AG04450 (cell line): ENCODE measurements at regions of chr4 and their contacts with region 1.

Region 1: GRCh38 chr4:7067452-7068278 is at the start of gene GRPEL1:
- DNase-seq: peak; percentile 97
- H3K4me3 ChIP-seq: peak within 1 kb of the TSS; percentile 87
- H3K27ac ChIP-seq: peak within 1 kb of the TSS; percentile 73
- H3K27me3 ChIP-seq: peaks cover 12% of the 10 kb centered on the region
- CTCF ChIP-seq: no peak
- polyA plus RNA-seq, gene GRPEL1: 34.5 and 39.4 TPM in 2 replicates

Region 2: DNA sequence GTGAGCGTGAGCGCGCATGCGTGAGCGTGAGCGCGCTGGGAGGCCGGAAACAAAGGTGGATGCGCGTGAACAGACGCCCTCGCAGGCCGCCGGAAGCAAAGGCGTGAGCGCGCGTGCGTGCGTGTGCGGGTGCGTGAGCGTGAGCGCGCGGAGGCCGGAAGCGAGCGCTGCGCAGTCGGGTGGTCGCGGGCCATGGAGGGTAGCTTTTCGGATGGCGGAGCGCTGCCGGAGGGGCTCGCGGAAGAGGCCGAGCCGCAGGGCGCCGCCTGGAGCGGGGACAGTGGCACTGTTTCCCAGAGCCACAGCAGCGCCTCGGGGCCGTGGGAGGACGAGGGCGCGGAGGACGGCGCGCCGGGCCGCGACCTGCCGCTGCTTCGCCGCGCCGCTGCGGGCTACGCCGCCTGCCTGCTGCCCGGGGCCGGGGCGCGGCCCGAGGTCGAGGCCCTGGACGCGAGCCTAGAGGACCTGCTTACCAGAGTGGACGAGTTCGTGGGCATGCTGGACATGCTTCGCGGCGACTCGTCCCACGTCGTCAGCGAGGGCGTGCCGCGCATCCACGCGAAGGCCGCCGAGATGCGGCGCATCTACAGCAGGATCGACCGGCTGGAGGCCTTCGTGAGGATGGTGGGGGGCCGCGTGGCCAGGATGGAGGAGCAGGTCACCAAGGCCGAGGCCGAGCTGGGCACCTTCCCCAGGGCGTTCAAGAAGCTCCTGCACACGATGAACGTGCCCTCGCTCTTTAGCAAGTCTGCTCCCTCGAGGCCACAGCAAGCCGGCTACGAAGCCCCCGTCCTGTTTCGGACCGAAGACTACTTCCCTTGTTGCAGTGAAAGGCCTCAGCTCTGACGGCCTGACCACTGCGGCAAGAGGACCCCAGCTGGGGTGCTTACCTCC is 351.4 kb before region 1 on chr4 and contains the start of gene BLOC1S4:
- CTCF ChIA-PET with region 1: interaction called, 23 read pairs
- POLR2A ChIA-PET with region 1: no interaction called
- DNase-seq: peak; percentile 85
- H3K4me3 ChIP-seq: peak within 1 kb of the TSS; percentile 94
- H3K27ac ChIP-seq: peak within 1 kb of the TSS; percentile 39
- H3K27me3 ChIP-seq: peaks cover 3% of the 10 kb centered on the region
- CTCF ChIP-seq: no peak
- polyA plus RNA-seq, gene BLOC1S4: 14.5 and 15.4 TPM in 2 replicates

Region 3: DNA sequence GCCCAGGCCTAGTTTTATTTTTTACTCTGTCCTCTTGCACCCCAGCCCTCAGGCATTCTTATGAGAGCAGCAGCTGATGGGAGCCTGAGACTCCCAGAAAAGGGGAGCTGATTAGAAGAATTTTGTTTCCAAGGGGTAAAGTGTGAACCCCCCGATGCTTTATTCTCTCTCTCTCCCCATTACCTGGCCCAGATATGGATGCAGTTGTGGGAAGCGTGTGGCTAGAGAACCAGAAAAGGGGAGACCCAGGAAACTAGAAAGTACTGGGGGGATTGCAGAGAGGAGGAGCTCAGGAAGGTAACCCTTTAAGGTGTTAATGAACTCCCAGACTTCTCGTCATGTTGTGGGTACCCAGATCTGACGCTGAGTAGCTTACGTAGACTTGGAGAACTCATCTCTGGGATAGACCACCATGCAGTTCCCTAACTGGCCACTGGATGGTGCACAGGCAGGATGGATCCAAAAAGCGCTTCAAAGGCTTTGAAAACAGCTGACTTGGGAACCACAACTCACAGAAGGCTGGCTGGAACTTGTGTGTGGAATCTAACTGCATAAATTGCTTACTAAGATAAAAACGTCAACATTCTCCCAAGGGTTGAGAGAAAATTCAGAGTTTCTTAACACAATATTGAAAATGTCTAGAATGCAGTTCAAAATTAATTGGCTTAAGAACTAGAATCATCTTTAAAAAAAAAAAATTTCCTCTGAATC is 93.4 kb before region 1 on chr4:
- CTCF ChIA-PET with region 1: interaction called, 44 read pairs
- POLR2A ChIA-PET with region 1: interaction called, 3 read pairs
- DNase-seq: peak; percentile 67
- H3K4me3 ChIP-seq: no peak overlapping the region
- H3K27ac ChIP-seq: no peak overlapping the region
- H3K27me3 ChIP-seq: no peaks in the 10 kb centered on the region
- CTCF ChIP-seq: peak; percentile 99

Region 4: DNA sequence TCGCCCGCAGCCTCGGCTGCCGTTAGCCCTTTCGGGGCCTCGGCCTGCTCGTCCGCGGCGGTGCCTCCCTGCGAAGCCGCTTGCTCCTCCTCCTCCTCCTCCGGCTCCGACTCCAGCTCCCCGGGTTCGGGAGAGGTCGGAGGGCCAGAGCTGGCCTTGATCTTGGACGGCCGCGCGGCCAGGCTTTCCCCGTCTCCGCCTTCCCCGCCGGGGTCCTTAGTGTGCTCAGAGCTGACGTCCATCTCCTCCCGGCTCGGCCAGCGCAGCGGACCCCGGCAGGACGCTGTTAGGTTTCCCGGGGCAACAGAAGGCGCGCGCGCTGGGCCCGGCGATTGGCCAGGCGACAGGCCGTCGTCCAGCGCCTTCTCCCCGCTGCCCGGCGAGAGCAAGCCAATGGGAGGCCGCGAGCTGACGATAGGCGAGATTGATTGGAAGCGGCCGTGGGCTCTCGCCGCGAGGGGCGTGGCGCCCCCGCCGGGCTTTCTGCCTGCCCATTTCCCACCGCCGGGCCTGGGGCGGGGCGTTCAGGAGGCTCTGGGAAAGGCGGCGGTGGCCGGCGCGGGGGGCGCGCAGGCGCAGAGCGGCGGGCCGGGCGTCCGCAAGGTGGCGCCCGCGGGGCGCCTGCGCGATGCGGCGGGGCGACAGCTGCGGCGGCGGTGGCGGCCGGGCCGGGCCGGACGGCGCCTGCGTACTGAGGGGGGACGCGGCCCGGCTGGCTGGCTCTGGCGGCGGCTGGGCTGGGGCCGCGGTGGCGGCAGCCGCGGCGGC is 24.8 kb before region 1 on chr4 and contains the start of gene TADA2B:
- CTCF ChIA-PET with region 1: interaction called, 38 read pairs
- POLR2A ChIA-PET with region 1: interaction called, 27 read pairs
- DNase-seq: peak; percentile 92
- H3K4me3 ChIP-seq: peak within 1 kb of the TSS; percentile 92
- H3K27ac ChIP-seq: peak within 1 kb of the TSS; percentile 70
- H3K27me3 ChIP-seq: no peaks in the 10 kb centered on the region
- CTCF ChIP-seq: no peak
- polyA plus RNA-seq, gene TADA2B: 6.4 and 6.5 TPM in 2 replicates

Region 5: DNA sequence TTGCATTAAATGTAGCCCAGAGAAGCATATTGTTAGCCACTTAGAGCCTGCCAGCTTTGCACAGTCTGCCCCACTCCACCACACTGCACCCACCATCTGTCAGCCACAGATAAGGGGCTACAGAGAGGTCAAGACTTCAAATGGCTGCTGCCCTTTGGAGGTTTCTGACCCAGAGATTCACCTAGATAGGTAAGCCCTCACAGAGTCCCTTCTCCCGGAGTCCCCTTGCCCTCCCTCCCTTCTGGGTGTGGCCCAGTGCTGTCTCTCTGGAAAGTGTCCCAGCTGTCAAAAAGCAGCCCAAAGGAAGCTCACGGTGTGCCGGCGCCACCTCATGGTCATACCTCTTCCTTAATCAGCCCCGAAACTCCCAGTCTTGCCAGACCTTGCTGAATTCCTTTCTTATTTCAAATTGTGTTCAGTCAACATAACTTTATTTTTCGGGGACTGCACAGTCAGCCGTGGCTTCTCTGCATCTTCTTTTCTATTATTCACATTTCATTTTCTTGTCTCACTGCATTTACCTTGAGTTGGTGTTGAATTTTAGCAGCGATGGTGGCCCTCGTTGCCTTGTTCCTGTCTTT is 14.3 kb after region 1 on chr4:
- CTCF ChIA-PET with region 1: interaction called, 17 read pairs
- POLR2A ChIA-PET with region 1: interaction called, 3 read pairs
- DNase-seq: no peak
- H3K4me3 ChIP-seq: no peak overlapping the region
- H3K27ac ChIP-seq: no peak overlapping the region
- H3K27me3 ChIP-seq: peaks cover 30% of the 10 kb centered on the region
- CTCF ChIP-seq: peak; percentile 31; the same call in 1 of the 2 replicates

Region 6: GRCh38 chr4:7101692-7102515 is 34.2 kb after region 1 on chr4:
- CTCF ChIA-PET with region 1: interaction called, 20 read pairs
- POLR2A ChIA-PET with region 1: no interaction called
- DNase-seq: peak; percentile 24
- H3K4me3 ChIP-seq: peak overlapping the region; percentile 42
- H3K27ac ChIP-seq: no peak overlapping the region
- H3K27me3 ChIP-seq: peaks cover 26% of the 10 kb centered on the region
- CTCF ChIP-seq: peak; percentile 77